ENCODE measurements at regions of chr12 and their contacts with region 1.

Region 1: GRCh38 chr12:14629832-14630710 is 62.4 kb upstream of the PLBD1 start:
- DNase-seq: peak; percentile 78
- H3K4me3 Mint-ChIP-seq: no peak overlapping the region
- H3K27ac Mint-ChIP-seq: no peak overlapping the region
- H3K4me1 Mint-ChIP-seq: no peaks in the 10 kb centered on the region
- H3K27me3 Mint-ChIP-seq: peaks cover 8% of the 10 kb centered on the region

Region 2: GRCh38 chr12:14185427-14186192 is 444.5 kb before region 1 on chr12:
- CTCF ChIA-PET with region 1: interaction called, 14 read pairs
- DNase-seq: peak; percentile 27
- H3K4me3 Mint-ChIP-seq: no peak overlapping the region
- H3K27ac Mint-ChIP-seq: no peak overlapping the region
- H3K4me1 Mint-ChIP-seq: no peaks in the 10 kb centered on the region
- H3K27me3 Mint-ChIP-seq: peaks cover 6% of the 10 kb centered on the region

Region 3: GRCh38 chr12:14618983-14619382 is 11.1 kb before region 1 on chr12:
- CTCF ChIA-PET with region 1: interaction called, 11 read pairs
- DNase-seq: no peak
- H3K4me3 Mint-ChIP-seq: no peak overlapping the region
- H3K27ac Mint-ChIP-seq: no peak overlapping the region
- H3K4me1 Mint-ChIP-seq: no peaks in the 10 kb centered on the region
- H3K27me3 Mint-ChIP-seq: peaks cover 5% of the 10 kb centered on the region

Region 4: GRCh38 chr12:14716848-14717444 is 86.9 kb after region 1 on chr12:
- CTCF ChIA-PET with region 1: interaction called, 23 read pairs
- DNase-seq: peak; percentile 64
- H3K4me3 Mint-ChIP-seq: no peak overlapping the region
- H3K27ac Mint-ChIP-seq: no peak overlapping the region
- H3K4me1 Mint-ChIP-seq: peaks cover 3% of the 10 kb centered on the region
- H3K27me3 Mint-ChIP-seq: peaks cover 12% of the 10 kb centered on the region